Vagina (tissue), 2 donors: ENCODE measurements at regions of chr2 and their contacts with region 1.

Region 1: DNA sequence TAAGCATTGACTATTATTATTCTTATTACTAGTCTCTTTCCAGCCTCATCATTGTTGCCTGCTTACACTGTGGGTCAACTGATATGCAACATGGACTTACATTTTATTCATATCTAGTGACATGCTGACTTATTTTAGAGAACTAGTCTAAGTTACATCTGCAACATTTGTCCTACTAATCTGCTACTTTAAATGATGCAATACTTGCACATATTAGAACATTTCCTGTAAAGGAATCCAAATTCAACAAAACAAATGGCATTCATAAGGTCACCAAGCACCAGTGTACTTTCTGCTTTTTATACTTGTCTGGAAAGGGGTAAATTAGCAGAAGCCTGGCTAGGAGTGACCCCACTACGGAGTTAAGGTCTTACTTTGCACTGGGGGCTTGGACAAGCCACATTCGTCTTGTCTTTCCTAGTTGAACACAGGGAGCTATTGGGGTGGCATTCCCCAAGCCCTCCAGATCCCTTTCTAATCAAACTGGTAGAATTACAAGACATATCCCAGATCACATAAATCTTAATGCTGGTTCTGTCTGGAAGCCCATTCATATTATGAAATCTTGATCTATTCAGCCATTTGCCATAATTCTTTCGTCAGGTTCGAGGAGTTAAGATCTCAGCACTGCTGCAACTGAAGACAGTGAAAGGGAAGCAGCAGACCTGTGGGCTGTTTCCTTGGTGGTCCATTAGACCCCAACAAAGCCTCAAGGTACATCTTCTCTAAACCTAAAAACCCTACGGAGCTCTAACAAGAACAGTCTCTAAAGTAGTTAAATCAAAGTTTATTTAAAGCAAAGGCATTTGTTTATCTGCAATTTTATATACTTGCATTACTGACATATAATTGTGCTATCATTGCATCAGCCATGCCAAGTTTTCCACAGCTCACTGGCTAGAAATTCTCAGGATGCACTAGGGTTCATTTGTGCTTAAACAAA is 49.9 kb upstream of the RTN4 start:
- DNase-seq: no peak
- H3K4me3 ChIP-seq: no peak overlapping the region
- H3K27ac ChIP-seq: peak overlapping the region; percentile 34
- H3K4me1 ChIP-seq: peaks cover 21% of the 10 kb centered on the region
- H3K27me3 ChIP-seq: no peaks in the 10 kb centered on the region
- CTCF ChIP-seq: no peak
- POLR2A ChIP-seq: no peak

Region 2: DNA sequence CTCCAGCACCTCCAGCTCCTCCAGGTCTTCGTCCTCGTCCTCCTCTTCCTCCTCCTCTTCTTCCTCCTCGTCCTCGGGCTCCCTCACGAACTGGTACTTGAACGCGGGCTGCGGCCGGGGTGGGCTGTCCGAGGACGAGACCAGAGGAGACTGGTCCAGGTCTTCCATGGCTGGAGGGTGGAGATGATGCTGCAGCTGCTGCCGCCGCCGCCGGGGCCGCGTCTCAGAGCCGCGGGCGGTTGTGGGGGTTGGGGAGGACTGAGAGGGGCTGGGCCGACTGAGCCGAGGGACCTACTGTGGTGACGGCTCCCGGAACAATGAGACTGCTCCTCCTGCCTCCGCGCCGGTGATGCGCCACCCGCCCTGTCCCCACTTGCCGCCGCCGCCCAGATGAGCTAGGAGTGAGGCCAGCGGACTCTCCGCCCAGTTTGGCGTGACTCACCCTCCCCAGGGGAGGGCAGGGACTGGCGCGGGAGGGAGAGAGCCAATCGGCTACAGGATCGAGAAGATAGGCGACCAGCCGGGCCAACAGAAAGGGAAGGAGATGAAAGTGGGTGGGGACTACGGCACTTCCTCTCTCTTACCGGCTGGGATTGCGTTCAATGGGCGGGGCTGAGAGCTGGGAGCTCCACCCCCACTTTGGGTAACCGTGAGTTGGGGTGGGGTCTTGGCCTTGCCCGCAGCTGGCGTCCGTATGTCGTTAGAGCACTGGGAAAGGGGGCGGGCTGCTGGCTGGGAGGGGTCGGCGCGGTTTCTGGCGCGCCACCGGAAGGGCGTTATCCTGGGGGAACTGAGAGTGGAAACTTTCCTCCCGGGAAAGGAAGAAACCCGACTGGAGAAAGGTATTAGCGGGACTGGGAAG is 49.8 kb before region 1 on chr2 and contains the start of gene RTN4:
- intact Hi-C with region 1: loop called (anchors 5 kb)
- DNase-seq: peak; percentile 100
- H3K4me3 ChIP-seq: peak within 1 kb of the TSS; percentile 87 to 95
- H3K27ac ChIP-seq: peak within 1 kb of the TSS; percentile 99
- H3K4me1 ChIP-seq: peaks cover 44% of the 10 kb centered on the region
- H3K27me3 ChIP-seq: no peaks in the 10 kb centered on the region
- CTCF ChIP-seq: peak in 1 of 3 experiments; percentile 6
- POLR2A ChIP-seq: peak; percentile 93 to 99
- total RNA-seq, gene RTN4: 174 TPM

Region 3: DNA sequence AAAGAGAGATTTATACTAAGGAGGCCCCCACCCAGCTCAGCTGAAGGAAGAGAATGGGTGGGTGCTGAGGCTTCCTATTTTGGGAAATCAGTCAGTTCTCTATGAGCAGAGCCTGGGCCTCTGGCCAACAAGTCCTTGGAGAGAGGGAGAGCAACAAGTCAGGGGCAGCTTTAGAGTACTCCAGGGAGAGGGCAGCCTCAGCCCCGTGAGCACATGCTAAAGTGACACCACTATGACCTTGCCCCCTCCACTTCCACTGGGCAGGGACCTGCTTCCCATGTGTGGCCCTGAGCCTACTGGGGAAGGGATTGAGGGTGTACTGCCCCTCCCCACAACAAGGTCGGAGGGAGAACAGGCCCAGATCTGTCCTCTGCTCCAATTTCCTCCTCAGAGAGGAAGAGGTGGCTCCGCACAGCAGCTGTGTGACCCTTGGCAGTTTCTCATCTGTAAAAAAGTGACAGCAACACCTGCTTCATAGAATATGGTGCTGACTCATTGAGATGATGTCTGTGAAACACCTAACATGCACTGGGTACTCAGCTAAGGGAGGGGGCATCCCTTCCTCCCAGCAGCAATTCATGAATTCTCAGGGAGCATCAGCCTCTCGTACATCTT is 59.0 kb after region 1 on chr2:
- intact Hi-C with region 1: loop called (anchors 5 kb)
- DNase-seq: no peak
- H3K4me3 ChIP-seq: no peak overlapping the region
- H3K27ac ChIP-seq: peak overlapping the region; percentile 30
- H3K4me1 ChIP-seq: peaks cover 74% of the 10 kb centered on the region
- H3K27me3 ChIP-seq: no peaks in the 10 kb centered on the region
- CTCF ChIP-seq: no peak
- POLR2A ChIP-seq: no peak

Region 4: GRCh38 chr2:55712477-55713060 is 612.4 kb after region 1 on chr2:
- intact Hi-C with region 1: no loop called
- DNase-seq: no peak
- H3K4me3 ChIP-seq: no peak overlapping the region
- H3K27ac ChIP-seq: no peak overlapping the region
- H3K4me1 ChIP-seq: no peaks in the 10 kb centered on the region
- H3K27me3 ChIP-seq: no peaks in the 10 kb centered on the region
- CTCF ChIP-seq: no peak
- POLR2A ChIP-seq: no peak